Endothelial cell of umbilical vein (primary cell): ENCODE measurements at regions of chr1 and their contacts with region 1.

Region 1: GRCh38 chr1:220733090-220733601 is 15.0 kb upstream of the MTARC2 start:
- DNase-seq: peak; percentile 92
- H3K4me3 ChIP-seq: peak overlapping the region in 1 of 3 experiments; percentile 47
- H3K27ac ChIP-seq: peak overlapping the region; percentile 96
- H3K4me1 ChIP-seq: peaks cover 32% of the 10 kb centered on the region
- H3K27me3 ChIP-seq: no peaks in the 10 kb centered on the region
- CTCF ChIP-seq: peak; percentile 84 to 85
- POLR2A ChIP-seq: no peak

Region 2: GRCh38 chr1:220281159-220281574 is 452.0 kb before region 1 on chr1:
- CTCF ChIA-PET with region 1: interaction called, 19 read pairs
- POLR2A ChIA-PET with region 1: no interaction called
- dilution Hi-C with region 1: no loop called
- intact Hi-C with region 1: loop called (anchors 1 kb)
- DNase-seq: peak; percentile 53
- H3K4me3 ChIP-seq: no peak overlapping the region
- H3K27ac ChIP-seq: no peak overlapping the region
- H3K4me1 ChIP-seq: no peaks in the 10 kb centered on the region
- H3K27me3 ChIP-seq: peaks cover 20 to 24% of the 10 kb centered on the region in 2 experiments
- CTCF ChIP-seq: peak; percentile 17 to 18
- POLR2A ChIP-seq: no peak

Region 3: GRCh38 chr1:220527908-220528678 is 205.1 kb before region 1 on chr1 and contains the start of gene MARK1:
- CTCF ChIA-PET with region 1: interaction called, 3 read pairs
- POLR2A ChIA-PET with region 1: no interaction called
- dilution Hi-C with region 1: no loop called
- intact Hi-C with region 1: loop called (anchors 1 kb)
- DNase-seq: peak; percentile 37
- H3K4me3 ChIP-seq: peak within 1 kb of the TSS; percentile 64 to 94 (median 78)
- H3K27ac ChIP-seq: peak within 1 kb of the TSS; percentile 2
- H3K4me1 ChIP-seq: peaks cover 7% of the 10 kb centered on the region
- H3K27me3 ChIP-seq: peaks cover 10 to 23% of the 10 kb centered on the region in 2 experiments
- CTCF ChIP-seq: no peak
- POLR2A ChIP-seq: peak; percentile 28
- total RNA-seq, gene MARK1: 5.5 and 6.0 TPM in 2 replicates

Region 4: GRCh38 chr1:220690140-220691025 is 42.8 kb before region 1 on chr1 and contains the start of gene C1orf115:
- CTCF ChIA-PET with region 1: interaction called, 83 read pairs
- POLR2A ChIA-PET with region 1: no interaction called
- dilution Hi-C with region 1: no loop called
- intact Hi-C with region 1: loop called (anchors 1 kb)
- DNase-seq: peak; percentile 81
- H3K4me3 ChIP-seq: peak within 1 kb of the TSS; percentile 61 to 78 (median 78)
- H3K27ac ChIP-seq: no peak within 1 kb of the TSS
- H3K4me1 ChIP-seq: peaks cover 17% of the 10 kb centered on the region
- H3K27me3 ChIP-seq: no peaks in the 10 kb centered on the region
- CTCF ChIP-seq: peak; percentile 99
- POLR2A ChIP-seq: peak; percentile 54
- total RNA-seq, gene C1orf115: 15.8 and 16.4 TPM in 2 replicates

Region 5: GRCh38 chr1:220748089-220748934 is 15.2 kb after region 1 on chr1 and contains the start of gene MTARC2:
- CTCF ChIA-PET with region 1: interaction called, 82 read pairs
- POLR2A ChIA-PET with region 1: interaction called, 9 read pairs
- dilution Hi-C with region 1: no loop called
- intact Hi-C with region 1: loop called (anchors 1 kb)
- DNase-seq: peak; percentile 85
- H3K4me3 ChIP-seq: peak within 1 kb of the TSS; percentile 60 to 78 (median 74)
- H3K27ac ChIP-seq: peak within 1 kb of the TSS; percentile 42
- H3K4me1 ChIP-seq: peaks cover 14% of the 10 kb centered on the region
- H3K27me3 ChIP-seq: no peaks in the 10 kb centered on the region
- CTCF ChIP-seq: no peak
- POLR2A ChIP-seq: peak; percentile 88
- total RNA-seq, gene MTARC2: 12.0 and 14.1 TPM in 2 replicates